Activated naive CD4-positive, alpha-beta T cell treated with anti-CD3 and anti-CD28 coated beads, Interleukin-2, amount 10 ng/mL, durations not matched to agents 7 days and 5 days (primary cell): ENCODE measurements at regions of chr7 and their contacts with region 1.

Region 1: DNA sequence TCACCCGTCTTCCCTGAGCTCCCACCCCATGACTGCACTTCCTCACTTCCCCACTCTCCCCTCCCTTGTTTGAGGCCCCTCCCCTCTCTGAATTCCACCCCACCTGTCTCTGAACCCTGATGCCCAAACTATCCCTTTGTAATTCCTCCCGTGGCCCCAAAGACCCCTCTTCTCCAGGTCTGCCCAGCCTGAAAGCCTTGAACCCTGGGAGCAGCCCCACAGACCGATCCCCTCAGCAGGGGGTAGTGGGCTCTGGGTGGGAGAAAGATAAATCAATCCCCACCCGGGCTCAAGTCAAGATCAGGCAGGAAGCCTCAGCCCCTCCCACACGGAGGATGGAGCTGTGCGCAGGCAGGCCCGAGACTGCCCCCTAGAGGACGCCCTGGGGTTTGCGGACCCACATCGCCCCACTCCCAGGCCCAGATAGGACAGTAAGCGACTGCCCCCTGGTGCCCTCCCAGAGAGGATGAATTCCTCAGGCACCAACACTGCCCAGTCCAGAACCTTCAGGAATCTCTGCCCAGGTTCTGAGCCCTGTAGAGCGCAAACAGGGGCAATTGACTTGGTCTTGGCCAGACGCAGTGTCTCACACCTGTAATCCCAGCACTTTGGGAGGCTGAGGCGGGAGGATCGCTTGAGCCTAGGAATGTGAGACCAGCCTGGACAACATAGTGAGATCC is 11.7 kb downstream of the HSPB1 start:
- DNase-seq: peak; percentile 97
- H3K4me3 Mint-ChIP-seq: no peak overlapping the region
- H3K27ac Mint-ChIP-seq: no peak overlapping the region
- H3K4me1 Mint-ChIP-seq: peaks cover 28% of the 10 kb centered on the region
- H3K27me3 Mint-ChIP-seq: peaks cover 15% of the 10 kb centered on the region

Region 2: GRCh38 chr7:76179686-76180085 is 134.5 kb before region 1 on chr7:
- CTCF ChIA-PET with region 1: interaction called, 73 read pairs
- DNase-seq: no peak
- H3K4me3 Mint-ChIP-seq: no peak overlapping the region
- H3K27ac Mint-ChIP-seq: no peak overlapping the region
- H3K4me1 Mint-ChIP-seq: peaks cover 8% of the 10 kb centered on the region
- H3K27me3 Mint-ChIP-seq: peaks cover 9% of the 10 kb centered on the region

Region 3: GRCh38 chr7:76262683-76263402 is 51.3 kb before region 1 on chr7:
- CTCF ChIA-PET with region 1: interaction called, 19 read pairs
- DNase-seq: peak; percentile 59
- H3K4me3 Mint-ChIP-seq: no peak overlapping the region
- H3K27ac Mint-ChIP-seq: no peak overlapping the region
- H3K4me1 Mint-ChIP-seq: peaks cover 10% of the 10 kb centered on the region
- H3K27me3 Mint-ChIP-seq: peaks cover 70% of the 10 kb centered on the region

Region 4: GRCh38 chr7:76291343-76292212 is 22.6 kb before region 1 on chr7:
- CTCF ChIA-PET with region 1: interaction called, 62 read pairs
- DNase-seq: peak; percentile 90
- H3K4me3 Mint-ChIP-seq: no peak overlapping the region
- H3K27ac Mint-ChIP-seq: no peak overlapping the region
- H3K4me1 Mint-ChIP-seq: peaks cover 10% of the 10 kb centered on the region
- H3K27me3 Mint-ChIP-seq: peaks cover 29% of the 10 kb centered on the region

Region 5: DNA sequence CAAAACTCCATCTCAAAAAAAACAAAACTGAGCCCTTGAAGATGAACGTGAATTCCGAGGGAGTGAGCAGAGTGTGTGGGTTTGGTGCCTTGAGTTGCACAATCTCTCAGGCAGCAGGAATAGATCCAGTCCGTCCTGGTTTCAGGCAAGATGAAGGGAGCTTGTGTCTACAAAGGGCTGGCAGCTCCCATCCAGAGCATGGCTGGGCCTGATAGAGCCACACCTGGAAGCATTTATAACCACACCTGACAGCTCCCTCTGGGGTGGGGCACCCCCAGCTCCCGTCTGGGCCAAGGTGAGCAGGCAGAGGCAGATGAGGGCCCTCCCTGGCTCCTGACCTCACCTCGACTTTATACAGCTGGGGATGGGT is 16.8 kb before region 1 on chr7:
- CTCF ChIA-PET with region 1: interaction called, 62 read pairs
- DNase-seq: no peak
- H3K4me3 Mint-ChIP-seq: no peak overlapping the region
- H3K27ac Mint-ChIP-seq: no peak overlapping the region
- H3K4me1 Mint-ChIP-seq: peaks cover 5% of the 10 kb centered on the region
- H3K27me3 Mint-ChIP-seq: peaks cover 62% of the 10 kb centered on the region

Region 6: GRCh38 chr7:76302347-76303201 is 11.6 kb before region 1 on chr7 and contains the start of gene HSPB1:
- CTCF ChIA-PET with region 1: interaction called, 33 read pairs
- DNase-seq: peak; percentile 68
- H3K4me3 Mint-ChIP-seq: peak within 1 kb of the TSS; percentile 85
- H3K27ac Mint-ChIP-seq: peak within 1 kb of the TSS; percentile 76
- H3K4me1 Mint-ChIP-seq: peaks cover 21% of the 10 kb centered on the region
- H3K27me3 Mint-ChIP-seq: peaks cover 59% of the 10 kb centered on the region

Region 7: DNA sequence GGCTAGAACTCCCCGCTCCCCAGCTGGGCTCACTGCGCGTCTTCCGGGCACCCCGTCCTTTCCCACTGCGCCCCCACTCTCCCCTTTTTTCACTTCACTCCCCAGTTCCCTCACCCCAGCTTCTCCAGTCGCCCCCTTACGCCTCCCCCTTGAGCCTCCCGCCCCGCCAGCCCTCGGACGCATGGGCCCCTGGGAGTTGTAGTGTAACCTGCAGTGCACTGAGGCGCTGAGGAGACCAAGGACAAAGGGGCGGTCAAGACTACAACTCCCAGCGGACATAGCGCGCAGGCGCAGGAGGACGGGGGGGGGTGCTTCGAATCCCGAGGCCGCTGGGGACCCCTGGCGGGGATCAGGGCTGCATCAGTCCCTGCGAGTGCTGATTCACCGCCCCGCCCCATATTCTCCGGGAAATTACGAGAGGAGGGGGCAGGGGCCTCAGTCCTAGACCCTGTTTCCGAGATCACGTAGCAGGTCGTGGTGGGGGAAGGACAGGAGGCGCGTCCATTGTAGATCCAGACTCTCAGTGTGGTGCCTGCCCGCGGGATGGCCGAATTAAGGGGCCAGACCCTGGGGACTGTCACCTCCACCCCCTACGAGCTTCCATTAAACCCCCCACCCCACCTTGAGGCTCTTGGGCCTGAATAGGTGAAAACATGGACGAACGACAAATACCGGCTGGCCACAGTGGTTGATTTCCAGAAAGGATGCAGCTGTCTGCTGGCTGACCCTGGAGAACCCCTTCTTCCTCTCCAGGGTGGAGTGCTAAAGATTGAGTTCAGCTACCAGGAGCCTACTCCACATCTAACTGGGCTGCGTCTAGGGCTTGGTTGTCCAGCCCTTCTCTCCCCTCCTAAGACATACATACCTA is 45.2 kb after region 1 on chr7:
- CTCF ChIA-PET with region 1: interaction called, 21 read pairs
- DNase-seq: peak; percentile 99
- H3K4me3 Mint-ChIP-seq: peak overlapping the region; percentile 86
- H3K27ac Mint-ChIP-seq: peak overlapping the region; percentile 94
- H3K4me1 Mint-ChIP-seq: peaks cover 51% of the 10 kb centered on the region
- H3K27me3 Mint-ChIP-seq: peaks cover 10% of the 10 kb centered on the region